Endothelial cell of umbilical vein (primary cell): ENCODE measurements at regions of chr3 and their contacts with region 1.

Region 1: GRCh38 chr3:13106308-13107001 is 33.2 kb upstream of the IQSEC1 start:
- DNase-seq: no peak
- H3K4me3 ChIP-seq: no peak overlapping the region
- H3K27ac ChIP-seq: no peak overlapping the region
- H3K4me1 ChIP-seq: no peaks in the 10 kb centered on the region
- H3K27me3 ChIP-seq: no peaks in the 10 kb centered on the region
- CTCF ChIP-seq: no peak
- POLR2A ChIP-seq: no peak

Region 2: DNA sequence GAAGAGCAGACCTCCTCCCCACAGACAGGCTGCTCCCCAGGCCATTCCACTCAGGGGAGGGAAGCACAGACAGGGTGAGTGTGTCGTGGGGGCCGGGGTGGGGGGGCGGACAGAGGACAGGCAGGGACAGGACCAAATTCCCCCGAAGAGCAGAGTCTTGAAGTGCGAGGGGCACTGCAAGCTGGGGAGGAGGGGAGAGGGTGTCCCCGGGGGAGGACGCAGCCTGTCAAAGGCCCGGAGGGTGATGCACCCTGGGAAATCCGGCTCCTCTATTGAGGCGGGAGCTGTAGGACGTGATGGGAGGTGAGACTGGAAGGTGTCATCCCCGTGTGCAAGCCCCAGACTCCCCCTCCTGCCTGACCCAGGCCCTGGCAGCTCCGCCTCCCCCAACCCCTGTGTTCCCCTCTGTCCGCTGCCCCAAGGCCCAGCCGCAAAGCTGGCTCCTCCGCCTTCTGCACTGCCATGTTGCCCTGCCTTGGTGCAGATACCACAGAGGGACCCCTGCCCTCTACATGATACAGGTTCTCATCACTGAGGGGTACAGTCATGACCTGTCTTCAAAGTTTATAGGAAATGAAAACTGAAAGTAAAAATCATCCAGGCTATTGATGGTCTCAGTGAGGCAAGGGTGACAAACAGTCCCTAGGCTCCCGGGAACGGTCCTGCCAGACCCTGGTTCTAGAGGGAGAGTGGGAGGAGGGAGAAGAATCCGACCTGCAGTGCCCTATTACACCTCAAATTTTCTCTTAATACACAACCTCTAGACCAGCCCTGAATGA is 43.1 kb after region 1 on chr3:
- CTCF ChIA-PET with region 1: no interaction called
- POLR2A ChIA-PET with region 1: no interaction called
- dilution Hi-C with region 1: no loop called
- intact Hi-C with region 1: loop called (anchors 2 kb)
- DNase-seq: no peak
- H3K4me3 ChIP-seq: no peak overlapping the region
- H3K27ac ChIP-seq: no peak overlapping the region
- H3K4me1 ChIP-seq: no peaks in the 10 kb centered on the region
- H3K27me3 ChIP-seq: no peaks in the 10 kb centered on the region
- CTCF ChIP-seq: no peak
- POLR2A ChIP-seq: no peak